Sciatic nerve (tissue), 2 donors: ENCODE measurements at regions of chr2 and their contacts with region 1.

Region 1: DNA sequence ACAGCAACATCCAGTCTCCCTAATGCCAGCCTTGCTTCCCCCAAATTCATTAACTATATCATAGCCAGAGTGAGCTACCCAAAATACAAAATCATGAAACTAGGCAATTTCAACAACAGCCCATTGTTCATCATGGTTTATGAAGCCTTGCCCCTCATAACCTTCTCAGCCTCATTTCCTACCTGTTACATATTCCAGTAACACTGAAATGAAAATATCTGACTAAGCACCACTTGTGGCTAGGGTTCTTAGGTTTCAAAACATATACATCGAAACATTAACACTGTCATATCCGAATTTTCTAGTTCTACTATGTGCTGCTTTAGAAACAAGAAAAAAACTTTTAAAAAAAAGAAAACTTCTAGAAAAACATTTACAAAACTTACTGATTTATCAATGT is 59.5 kb downstream of the ATAD2B start:
- DNase-seq: no peak
- ATAC-seq: no peak

Region 2: DNA sequence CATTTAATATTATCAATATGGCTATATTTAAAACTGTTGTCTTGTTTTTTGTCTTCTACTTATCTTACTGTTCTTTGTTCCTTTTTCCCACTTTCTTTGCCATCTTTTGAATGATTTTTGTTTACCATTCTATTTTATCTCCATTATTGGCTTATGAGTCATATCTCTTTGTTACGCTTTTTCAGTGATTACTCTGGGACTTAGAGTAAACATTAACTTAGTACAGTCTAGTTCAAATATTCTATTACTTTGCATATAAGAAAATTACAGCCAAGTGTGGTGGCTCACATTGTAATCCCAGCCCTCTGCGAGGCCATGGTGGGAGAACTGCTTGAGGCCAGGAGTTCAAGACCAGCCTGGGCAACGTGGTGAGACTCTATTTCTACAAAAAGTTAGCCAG is 1026.5 kb after region 1 on chr2:
- intact Hi-C with region 1: loop called (anchors 5 kb)
- DNase-seq: no peak
- ATAC-seq: no peak